CD4-positive, alpha-beta T cell (primary cell): ENCODE measurements at regions of chr11 and their contacts with region 1.

Region 1: DNA sequence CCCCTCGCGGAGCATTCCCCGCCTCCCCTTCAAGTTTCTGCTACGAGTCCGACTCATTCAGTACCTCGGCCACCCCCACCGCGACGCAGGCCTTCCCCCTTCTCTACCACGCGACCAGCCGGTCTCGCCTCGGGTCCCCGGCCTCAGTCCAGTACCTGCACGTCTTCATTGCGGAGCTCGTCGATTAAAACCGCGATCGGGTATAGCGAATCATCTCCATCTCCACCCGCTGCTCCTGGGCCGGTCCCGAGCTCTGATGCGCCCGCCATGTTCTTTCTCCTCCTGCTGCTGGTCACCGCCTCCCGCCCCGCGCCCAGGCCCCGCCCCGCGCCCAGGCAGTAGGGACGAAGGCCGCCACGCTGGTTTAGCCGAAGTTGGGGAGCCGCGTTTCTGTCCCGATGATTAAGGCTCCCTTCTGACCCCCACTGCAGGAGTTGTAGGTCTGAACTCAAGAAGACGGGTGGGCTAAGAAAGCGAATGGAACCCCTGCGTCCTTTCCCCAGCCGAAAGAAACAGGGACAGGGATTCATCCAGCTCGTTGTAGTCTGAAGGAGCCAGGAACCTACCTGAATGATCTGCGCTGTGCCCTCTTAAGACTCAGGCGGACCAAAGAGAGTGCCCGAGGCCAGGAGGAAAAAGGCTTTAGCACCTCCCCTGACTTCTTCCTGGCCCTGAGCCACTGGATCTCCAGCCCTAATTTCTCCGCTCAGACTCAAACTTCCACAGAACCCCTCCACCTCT is at the start of gene PPP2R1B:
- DNase-seq: peak; percentile 52 to 85 (median 64)
- ATAC-seq: peak; percentile 97
- H3K4me3 ChIP-seq: peak within 1 kb of the TSS; percentile 85
- H3K4me3 Mint-ChIP-seq: peak within 1 kb of the TSS; percentile 99
- H3K27ac ChIP-seq: peak within 1 kb of the TSS; percentile 16 to 67
- H3K27ac Mint-ChIP-seq: peak within 1 kb of the TSS; percentile 70
- H3K4me1 ChIP-seq: peaks cover 12% of the 10 kb centered on the region
- H3K4me1 Mint-ChIP-seq: peaks cover 41% of the 10 kb centered on the region
- H3K27me3 ChIP-seq: no peaks in the 10 kb centered on the region
- H3K27me3 Mint-ChIP-seq: no peaks in the 10 kb centered on the region
- CTCF ChIP-seq: no peak
- total RNA-seq, gene PPP2R1B: 34.5 to 39.2 TPM

Region 2: GRCh38 chr11:110296226-110297075 is 1469.8 kb before region 1 on chr11 and contains the start of gene RDX:
- CTCF ChIA-PET with region 1: no interaction called
- POLR2A ChIA-PET with region 1: no interaction called
- intact Hi-C with region 1: loop called in 1 of 2 experiments (anchors 10 kb)
- DNase-seq: peak; percentile 9 to 86 (median 44)
- ATAC-seq: peak; percentile 65
- H3K4me3 ChIP-seq: peak within 1 kb of the TSS; percentile 79
- H3K4me3 Mint-ChIP-seq: peak within 1 kb of the TSS; percentile 91
- H3K27ac ChIP-seq: no peak within 1 kb of the TSS
- H3K27ac Mint-ChIP-seq: peak within 1 kb of the TSS; percentile 63
- H3K4me1 ChIP-seq: peaks cover 20% of the 10 kb centered on the region
- H3K4me1 Mint-ChIP-seq: peaks cover 37% of the 10 kb centered on the region
- H3K27me3 ChIP-seq: no peaks in the 10 kb centered on the region
- H3K27me3 Mint-ChIP-seq: no peaks in the 10 kb centered on the region
- CTCF ChIP-seq: no peak
- total RNA-seq, gene RDX: 11.4 to 14.2 TPM

Region 3: GRCh38 chr11:111870886-111871692 is 104.8 kb after region 1 on chr11 and contains the start of gene ALG9:
- CTCF ChIA-PET with region 1: interaction called, 4 read pairs
- POLR2A ChIA-PET with region 1: interaction called, 11 read pairs
- intact Hi-C with region 1: loop called in 1 of 2 experiments (anchors 5 kb)
- DNase-seq: peak; percentile 82 to 92 (median 90)
- ATAC-seq: peak; percentile 83
- H3K4me3 ChIP-seq: peak within 1 kb of the TSS; percentile 82
- H3K4me3 Mint-ChIP-seq: peak within 1 kb of the TSS; percentile 90
- H3K27ac ChIP-seq: peak within 1 kb of the TSS; percentile 83 to 84
- H3K27ac Mint-ChIP-seq: peak within 1 kb of the TSS; percentile 93
- H3K4me1 ChIP-seq: peaks cover 19% of the 10 kb centered on the region
- H3K4me1 Mint-ChIP-seq: peaks cover 35% of the 10 kb centered on the region
- H3K27me3 ChIP-seq: no peaks in the 10 kb centered on the region
- H3K27me3 Mint-ChIP-seq: no peaks in the 10 kb centered on the region
- CTCF ChIP-seq: peak; percentile 26
- total RNA-seq, gene ALG9: 31.1 to 33.4 TPM

Region 4: DNA sequence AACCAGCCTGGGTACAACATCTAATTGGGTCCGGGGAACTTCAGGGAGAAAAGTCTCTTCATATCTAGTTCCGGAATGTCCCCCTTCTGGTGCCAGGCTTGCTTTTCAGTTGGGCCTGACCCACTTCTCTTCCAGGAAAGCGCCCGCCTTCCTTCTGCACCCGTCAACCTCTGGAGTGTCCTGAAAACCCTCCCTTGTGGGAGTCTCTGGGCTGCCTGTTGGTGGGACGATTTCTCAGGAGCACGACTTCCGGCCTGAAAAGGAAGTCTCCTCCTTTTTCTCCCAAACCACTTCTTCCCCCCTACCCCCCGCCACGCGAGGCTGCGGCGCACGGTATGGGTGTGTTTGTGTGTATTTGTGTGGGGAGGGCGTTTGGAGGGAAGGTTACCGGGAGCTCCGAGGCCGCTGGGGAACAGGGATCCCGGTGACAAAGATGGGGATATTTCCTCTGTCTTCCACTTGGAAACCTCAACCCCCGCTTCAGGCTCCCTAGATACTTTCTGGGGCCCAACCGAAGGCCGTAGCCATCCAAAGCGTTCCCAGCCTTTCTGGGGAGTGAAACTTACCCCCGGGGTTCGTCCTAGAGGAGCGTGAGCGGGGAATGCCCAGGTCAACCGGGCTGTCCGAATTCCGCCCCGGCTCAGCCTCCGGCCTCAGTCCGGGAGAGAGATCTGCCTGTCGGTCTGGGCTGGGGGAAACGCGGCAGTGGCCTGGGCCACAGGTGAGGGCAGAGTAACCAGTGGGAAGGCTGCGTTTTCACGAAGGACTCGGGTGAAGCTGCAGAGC is 308.0 kb after region 1 on chr11 and contains the start of gene NKAPD1:
- CTCF ChIA-PET with region 1: no interaction called
- POLR2A ChIA-PET with region 1: no interaction called
- intact Hi-C with region 1: loop called in 1 of 2 experiments (anchors 5 kb)
- DNase-seq: peak; percentile 65 to 92 (median 74)
- ATAC-seq: peak; percentile 87
- H3K4me3 ChIP-seq: peak within 1 kb of the TSS; percentile 80
- H3K4me3 Mint-ChIP-seq: peak within 1 kb of the TSS; percentile 97
- H3K27ac ChIP-seq: peak within 1 kb of the TSS; percentile 70 to 73
- H3K27ac Mint-ChIP-seq: peak within 1 kb of the TSS; percentile 78
- H3K4me1 ChIP-seq: peaks cover 13% of the 10 kb centered on the region
- H3K4me1 Mint-ChIP-seq: peaks cover 36% of the 10 kb centered on the region
- H3K27me3 ChIP-seq: no peaks in the 10 kb centered on the region
- H3K27me3 Mint-ChIP-seq: peaks cover 27% of the 10 kb centered on the region
- CTCF ChIP-seq: no peak
- total RNA-seq, gene NKAPD1: 14.8 to 16.0 TPM